ENCODE measurements at regions of chr7 and their contacts with region 1.

Region 1: DNA sequence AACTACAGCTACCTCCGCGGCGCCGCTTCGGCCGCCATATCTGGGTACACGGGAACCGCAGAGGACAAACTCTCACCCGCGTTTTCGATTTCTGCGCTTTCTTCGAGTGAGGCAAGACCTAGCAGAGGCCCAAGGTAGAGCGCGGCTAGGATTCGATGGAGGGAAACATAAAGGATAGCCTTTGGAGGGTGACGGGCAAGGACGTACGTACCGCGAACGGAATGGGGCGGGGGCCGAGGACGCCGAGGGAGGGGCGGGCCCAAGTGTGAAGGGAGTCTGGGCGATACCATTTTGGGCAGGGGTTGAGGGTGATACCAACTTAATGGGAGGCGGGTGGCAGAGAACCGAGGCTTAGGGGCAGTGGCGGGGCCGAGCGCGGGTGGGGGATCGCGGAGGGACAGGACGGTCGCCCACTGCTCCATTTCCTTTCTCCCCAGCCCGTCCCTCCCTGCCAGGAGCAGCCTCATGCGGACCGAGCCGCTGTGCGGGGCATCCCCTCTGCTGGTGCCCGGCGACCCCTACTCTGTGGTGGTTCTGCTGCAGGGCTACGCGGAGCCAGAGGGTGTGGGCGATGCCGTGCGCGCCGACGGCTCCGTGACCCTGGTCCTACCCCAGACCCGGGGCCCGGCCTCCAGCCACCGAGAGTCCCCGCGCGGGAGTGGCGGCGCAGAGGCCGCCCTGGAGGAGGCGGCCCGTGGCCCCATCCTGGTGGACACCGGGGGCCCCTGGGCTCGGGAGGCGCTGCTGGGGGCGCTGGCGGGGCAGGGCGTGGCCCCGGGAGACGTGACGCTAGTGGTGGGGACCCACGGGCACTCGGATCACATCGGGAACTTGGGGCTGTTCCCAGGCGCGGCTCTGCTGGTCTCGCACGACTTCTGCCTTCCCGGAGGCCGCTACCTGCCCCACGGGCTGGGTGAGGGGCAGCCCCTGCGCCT is at the start of gene MBLAC1:
- DNase-seq: peak; percentile 68
- ATAC-seq: peak; percentile 84
- H3K4me3 ChIP-seq: peak within 1 kb of the TSS; percentile 75
- H3K27ac ChIP-seq: peak within 1 kb of the TSS; percentile 99
- H3K4me1 ChIP-seq: peaks cover 17% of the 10 kb centered on the region
- H3K27me3 ChIP-seq: no peaks in the 10 kb centered on the region
- CTCF ChIP-seq: 0 out of 6 replicates have a peak, but pooled peaks of 1 of the 3 experiments have one; percentile 1
- EP300 ChIP-seq: no peak; a peak in 1 of 4 replicates
- POLR2A ChIP-seq: peak; percentile 79
- RAD21 ChIP-seq: no peak
- polyA plus RNA-seq, gene MBLAC1: 0.24 TPM in 1 of 2 experiments, not detected in the other

Region 2: DNA sequence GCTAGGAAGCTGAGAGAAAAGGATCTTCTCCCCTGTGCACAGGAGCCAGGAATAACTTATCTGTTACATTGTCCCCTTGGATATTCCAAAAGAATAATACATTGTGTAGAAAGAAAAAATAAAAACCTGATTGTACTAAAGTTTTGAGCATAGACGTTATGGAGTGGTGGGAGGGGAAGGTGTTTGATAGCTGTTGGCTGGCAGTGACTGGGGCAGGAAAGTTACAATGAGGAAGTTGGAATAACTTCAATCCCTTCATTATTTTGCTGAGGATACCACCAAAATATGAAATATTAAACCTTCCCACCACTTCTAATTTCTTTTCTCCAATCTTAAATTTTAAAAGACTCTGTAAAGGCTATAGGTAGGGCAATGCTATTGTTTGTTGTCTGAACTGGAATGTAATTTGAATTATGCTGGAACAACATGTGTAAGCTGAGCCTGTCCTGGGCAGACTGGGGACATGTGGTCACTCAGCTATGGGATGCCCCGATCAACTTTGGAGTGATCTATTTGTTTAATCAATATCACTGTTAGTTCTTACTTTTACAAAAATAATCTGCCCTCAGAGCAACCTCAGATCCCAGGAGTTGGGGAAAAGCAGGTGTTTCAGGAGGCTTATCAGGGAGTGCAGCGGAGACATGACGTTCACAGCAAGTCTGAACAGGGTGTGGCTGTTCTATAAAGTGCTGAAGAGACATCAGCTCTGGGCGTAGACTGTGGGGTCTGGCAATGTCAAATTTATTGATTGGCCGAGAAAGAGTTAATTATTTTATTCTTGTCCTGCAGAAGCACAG is 278.6 kb before region 1 on chr7:
- CTCF ChIA-PET with region 1: no interaction called
- POLR2A ChIA-PET with region 1: no interaction called
- RAD21 ChIA-PET with region 1: no interaction called
- SMC1A ChIA-PET with region 1: no interaction called
- in situ Hi-C with region 1: no loop called
- intact Hi-C with region 1: no loop called
- DNase-seq: no peak
- ATAC-seq: no peak
- H3K4me3 ChIP-seq: no peak overlapping the region
- H3K27ac ChIP-seq: no peak overlapping the region
- H3K4me1 ChIP-seq: no peaks in the 10 kb centered on the region
- H3K27me3 ChIP-seq: no peaks in the 10 kb centered on the region; a peak in 1 of 4 replicates
- CTCF ChIP-seq: no peak
- EP300 ChIP-seq: no peak
- POLR2A ChIP-seq: no peak
- RAD21 ChIP-seq: no peak

Region 3: GRCh38 chr7:99975782-99976521 is 151.2 kb before region 1 on chr7 and contains the start of gene AZGP1:
- CTCF ChIA-PET with region 1: interaction called, 55 read pairs
- POLR2A ChIA-PET with region 1: interaction called, 4 read pairs
- RAD21 ChIA-PET with region 1: interaction called, 5 read pairs
- SMC1A ChIA-PET with region 1: interaction called, 6 read pairs
- in situ Hi-C with region 1: no loop called
- intact Hi-C with region 1: loop called (anchors 5 kb)
- DNase-seq: no peak
- ATAC-seq: peak; percentile 68
- H3K4me3 ChIP-seq: no peak within 1 kb of the TSS
- H3K27ac ChIP-seq: no peak within 1 kb of the TSS
- H3K4me1 ChIP-seq: no peaks in the 10 kb centered on the region
- H3K27me3 ChIP-seq: no peaks in the 10 kb centered on the region
- CTCF ChIP-seq: no peak
- EP300 ChIP-seq: no peak
- POLR2A ChIP-seq: no peak
- RAD21 ChIP-seq: no peak
- polyA plus RNA-seq, gene AZGP1: not detected

Region 4: GRCh38 chr7:100081535-100082102 is 45.6 kb before region 1 on chr7 and contains the start of gene ZNF3:
- CTCF ChIA-PET with region 1: interaction called, 15 read pairs
- POLR2A ChIA-PET with region 1: interaction called, 6 read pairs
- RAD21 ChIA-PET with region 1: interaction called, 7 read pairs
- SMC1A ChIA-PET with region 1: interaction called, 6 read pairs
- in situ Hi-C with region 1: no loop called
- intact Hi-C with region 1: loop called (anchors 2 kb)
- DNase-seq: peak; percentile 97
- ATAC-seq: peak; percentile 90
- H3K4me3 ChIP-seq: peak within 1 kb of the TSS; percentile 88
- H3K27ac ChIP-seq: peak within 1 kb of the TSS; percentile 89
- H3K4me1 ChIP-seq: peaks cover 4% of the 10 kb centered on the region
- H3K27me3 ChIP-seq: no peaks in the 10 kb centered on the region
- CTCF ChIP-seq: peak; percentile 84 to 97 (median 89); a peak in 5 of 6 replicates
- EP300 ChIP-seq: peak in 1 of 2 experiments; percentile 60; a peak in 1 of 4 replicates
- POLR2A ChIP-seq: peak; percentile 96
- RAD21 ChIP-seq: peak; percentile 66
- polyA plus RNA-seq, gene ZNF3: 17.2 to 19.0 TPM

Region 5: DNA sequence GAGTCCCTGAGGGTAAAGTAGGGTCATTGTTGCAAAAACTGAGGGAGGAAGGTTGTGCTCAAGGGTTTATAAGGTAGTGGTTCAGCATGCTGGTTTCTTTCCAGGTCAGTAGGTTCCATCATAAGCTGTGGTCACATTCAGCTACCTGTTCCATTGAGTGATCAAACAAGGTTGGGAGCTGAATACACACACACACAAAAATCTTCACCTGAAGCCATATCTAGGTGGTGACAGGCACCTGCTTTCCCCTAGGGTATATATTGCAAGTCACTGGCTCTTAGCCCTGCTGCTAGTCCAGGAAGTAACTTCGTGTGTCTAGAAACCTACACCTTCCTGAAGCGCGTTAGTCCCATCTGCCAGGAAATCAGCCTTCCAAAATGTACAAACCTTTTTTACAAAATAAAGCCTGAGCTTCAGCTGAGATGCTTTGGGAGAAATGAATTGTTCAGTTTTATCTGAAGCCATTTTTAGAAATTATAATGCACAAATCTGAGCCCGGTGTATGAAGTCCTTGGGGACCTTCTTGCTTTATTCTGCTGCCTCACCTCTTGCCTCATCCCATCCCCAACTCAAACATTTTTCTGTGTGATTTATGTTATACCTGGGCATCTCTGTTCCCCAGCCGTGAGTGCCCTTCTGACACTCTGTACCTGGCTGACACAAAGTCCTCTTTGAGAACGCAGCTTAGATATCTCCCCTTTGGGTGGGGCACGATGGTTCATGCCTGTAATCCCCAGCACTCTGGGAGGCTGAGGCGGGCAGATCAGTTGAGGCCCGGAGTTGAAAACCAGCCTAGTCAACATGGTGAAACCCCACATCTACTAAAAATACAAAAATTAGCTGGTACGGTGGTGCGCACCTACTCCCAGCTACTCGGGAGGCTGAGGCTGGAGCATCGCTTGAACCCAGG is 10.9 kb after region 1 on chr7:
- CTCF ChIA-PET with region 1: interaction called, 16 read pairs
- POLR2A ChIA-PET with region 1: interaction called, 3 read pairs
- RAD21 ChIA-PET with region 1: interaction called, 9 read pairs
- SMC1A ChIA-PET with region 1: interaction called, 12 read pairs
- in situ Hi-C with region 1: no loop called
- intact Hi-C with region 1: no loop called
- DNase-seq: no peak
- ATAC-seq: peak; percentile 73
- H3K4me3 ChIP-seq: no peak overlapping the region
- H3K27ac ChIP-seq: no peak overlapping the region
- H3K4me1 ChIP-seq: peaks cover 14% of the 10 kb centered on the region
- H3K27me3 ChIP-seq: no peaks in the 10 kb centered on the region
- CTCF ChIP-seq: no peak
- EP300 ChIP-seq: no peak
- POLR2A ChIP-seq: no peak
- RAD21 ChIP-seq: no peak

Measured in GM12878 (cell line).